ENCODE measurements at regions of chr9 and their contacts with region 1.

Region 1: DNA sequence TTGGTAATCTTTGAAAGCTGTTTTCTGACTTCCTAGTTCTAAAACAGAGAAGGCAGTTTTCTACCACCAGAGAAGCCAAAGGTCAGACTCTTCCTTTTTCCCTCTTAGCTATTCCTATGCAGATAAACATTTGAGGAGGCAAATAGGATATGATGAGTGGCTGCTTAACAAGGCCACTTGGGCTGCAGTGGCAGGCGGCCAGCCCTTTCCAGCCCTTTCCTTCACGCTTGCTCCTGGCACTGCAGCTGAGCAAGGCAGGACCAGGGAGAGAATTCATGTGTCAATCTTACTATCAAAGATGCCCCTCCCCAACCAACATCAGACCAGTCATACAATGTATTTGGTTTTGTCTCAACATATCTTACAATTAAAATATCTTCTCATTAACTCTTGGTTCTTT is 36.8 kb upstream of the RNF38 start:
- DNase-seq: no peak
- H3K4me3 ChIP-seq: no peak overlapping the region
- H3K27ac ChIP-seq: no peak overlapping the region
- H3K4me1 ChIP-seq: peaks cover 0 to 4% (median 2%) of the 10 kb centered on the region in 4 experiments
- H3K27me3 ChIP-seq: no peaks in the 10 kb centered on the region

Region 2: DNA sequence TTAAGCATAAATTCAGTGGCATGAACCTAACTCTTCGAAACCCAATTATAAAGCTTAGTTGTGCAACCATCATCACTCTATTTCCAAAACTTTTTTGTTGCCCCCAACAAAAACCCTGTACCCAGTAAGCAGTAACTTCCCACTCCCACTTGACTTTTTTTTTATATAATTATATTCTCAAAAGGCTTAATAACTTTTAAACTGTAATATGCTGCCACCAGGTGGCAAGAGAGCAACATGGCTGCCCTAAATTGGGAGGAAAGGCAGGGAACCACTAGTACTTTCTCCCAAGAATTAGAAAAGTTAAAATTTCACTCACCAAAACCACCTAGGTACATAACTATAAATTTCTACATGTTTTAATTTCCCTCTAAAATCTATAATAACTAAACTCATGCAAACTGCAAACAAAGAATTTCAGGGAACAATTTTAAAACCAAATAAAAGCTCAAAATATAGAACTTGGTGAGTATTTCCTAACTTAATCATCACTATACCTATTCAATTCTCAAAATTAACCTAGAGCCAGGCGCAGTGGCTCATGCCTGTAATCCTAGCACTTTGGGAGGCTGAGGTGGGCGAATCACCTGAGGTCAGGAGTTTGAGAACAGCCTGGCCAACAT is 13.3 kb after region 1 on chr9:
- CTCF ChIA-PET with region 1: interaction called, 37 read pairs
- POLR2A ChIA-PET with region 1: interaction called, 3 read pairs
- DNase-seq: peak; percentile 57 to 64 (median 59)
- H3K4me3 ChIP-seq: no peak overlapping the region
- H3K27ac ChIP-seq: no peak overlapping the region
- H3K4me1 ChIP-seq: no peaks in the 10 kb centered on the region
- H3K27me3 ChIP-seq: no peaks in the 10 kb centered on the region